ENCODE measurements at regions of chr15 and their contacts with region 1.

Region 1: DNA sequence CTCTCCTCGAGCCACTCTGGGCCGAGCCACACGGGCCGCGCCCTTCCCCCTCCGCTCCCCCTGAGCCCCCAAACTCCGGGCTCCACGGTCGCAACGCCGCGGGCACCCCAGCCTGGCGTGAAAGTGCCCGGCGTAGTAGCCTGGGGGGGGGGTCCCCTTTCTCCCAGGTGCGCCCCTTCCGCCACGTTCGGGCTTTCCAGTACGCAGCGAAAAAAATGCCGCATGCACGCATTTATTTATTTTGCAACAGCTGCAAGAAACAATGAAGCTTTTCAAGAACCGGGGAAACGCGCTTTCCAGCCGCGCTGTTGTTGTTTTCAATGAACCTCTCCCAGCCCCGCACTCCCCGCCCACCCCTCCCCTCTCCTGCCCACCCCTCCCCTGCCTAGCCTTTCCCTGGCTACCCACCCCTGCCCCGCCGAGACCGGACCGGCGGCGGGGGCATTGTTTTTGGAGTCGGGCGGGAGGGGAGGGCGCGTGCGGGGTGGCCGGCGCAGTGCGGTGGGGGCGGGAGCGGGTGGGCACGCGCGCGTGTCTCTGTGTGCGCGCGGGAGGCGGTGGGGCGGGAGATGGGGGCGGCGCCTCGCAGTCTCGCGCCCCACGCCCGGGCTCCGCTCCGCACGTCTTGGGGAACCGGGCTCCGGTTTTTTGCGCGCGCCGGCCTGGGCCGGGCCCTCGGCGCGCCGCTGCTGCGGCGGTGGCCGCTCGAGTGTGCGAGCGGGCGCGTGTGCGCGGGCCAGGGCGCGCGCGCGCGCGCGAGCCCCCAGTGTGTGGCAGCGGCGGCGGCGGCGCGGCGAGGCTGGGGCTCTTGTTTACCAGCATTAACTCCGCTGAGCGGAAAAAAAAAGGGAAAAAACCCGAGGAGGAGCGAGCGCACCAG is at the start of gene IGF1R:
- DNase-seq: peak; percentile 94
- H3K4me3 ChIP-seq: peak within 1 kb of the TSS; percentile 74 to 94 (median 86)
- H3K27ac ChIP-seq: peak within 1 kb of the TSS; percentile 90 to 97 (median 94)
- H3K4me1 ChIP-seq: peaks cover 6 to 33% (median 24%) of the 10 kb centered on the region in 4 donors
- H3K27me3 ChIP-seq: no peaks in the 10 kb centered on the region
- CTCF ChIP-seq: peak in 1 of 3 experiments; percentile 14
- EP300 ChIP-seq: no peak
- POLR2A ChIP-seq: peak; percentile 6
- total RNA-seq, gene IGF1R: 33.6 to 95.3 (median 49.7) TPM

Region 2: GRCh38 chr15:97731859-97732258 is 916.2 kb before region 1 on chr15:
- intact Hi-C with region 1: no loop called
- DNase-seq: no peak
- H3K4me3 ChIP-seq: no peak overlapping the region
- H3K27ac ChIP-seq: no peak overlapping the region
- H3K4me1 ChIP-seq: peaks cover 0 to 6% (median 0%) of the 10 kb centered on the region in 4 donors
- H3K27me3 ChIP-seq: no peaks in the 10 kb centered on the region
- CTCF ChIP-seq: no peak
- EP300 ChIP-seq: no peak
- POLR2A ChIP-seq: no peak

Region 3: GRCh38 chr15:98442379-98442833 is 205.6 kb before region 1 on chr15:
- intact Hi-C with region 1: loop called (anchors 10 kb)
- DNase-seq: peak; percentile 89
- H3K4me3 ChIP-seq: no peak overlapping the region
- H3K27ac ChIP-seq: no peak overlapping the region
- H3K4me1 ChIP-seq: peaks cover 0 to 3% (median 0%) of the 10 kb centered on the region in 4 donors
- H3K27me3 ChIP-seq: peaks cover 0 to 6% (median 0%) of the 10 kb centered on the region in 4 donors
- CTCF ChIP-seq: peak; percentile 75 to 85 (median 81)
- EP300 ChIP-seq: no peak
- POLR2A ChIP-seq: no peak

Region 4: GRCh38 chr15:98523912-98524662 is 123.9 kb before region 1 on chr15:
- intact Hi-C with region 1: loop called (anchors 5 kb)
- DNase-seq: no peak
- H3K4me3 ChIP-seq: no peak overlapping the region
- H3K27ac ChIP-seq: no peak overlapping the region
- H3K4me1 ChIP-seq: peaks cover 0 to 13% (median 10%) of the 10 kb centered on the region in 4 donors
- H3K27me3 ChIP-seq: no peaks in the 10 kb centered on the region
- CTCF ChIP-seq: no peak
- EP300 ChIP-seq: no peak
- POLR2A ChIP-seq: no peak

Region 5: GRCh38 chr15:98548154-98548971 is 99.7 kb before region 1 on chr15:
- intact Hi-C with region 1: loop called (anchors 2 kb)
- DNase-seq: peak; percentile 93
- H3K4me3 ChIP-seq: peak overlapping the region; percentile 62 to 76 (median 71)
- H3K27ac ChIP-seq: peak overlapping the region; percentile 87 to 92 (median 90)
- H3K4me1 ChIP-seq: peaks cover 8 to 22% (median 19%) of the 10 kb centered on the region in 4 donors
- H3K27me3 ChIP-seq: no peaks in the 10 kb centered on the region
- CTCF ChIP-seq: peak in 2 of 3 experiments; percentile 11 to 29
- EP300 ChIP-seq: no peak
- POLR2A ChIP-seq: no peak

Region 6: DNA sequence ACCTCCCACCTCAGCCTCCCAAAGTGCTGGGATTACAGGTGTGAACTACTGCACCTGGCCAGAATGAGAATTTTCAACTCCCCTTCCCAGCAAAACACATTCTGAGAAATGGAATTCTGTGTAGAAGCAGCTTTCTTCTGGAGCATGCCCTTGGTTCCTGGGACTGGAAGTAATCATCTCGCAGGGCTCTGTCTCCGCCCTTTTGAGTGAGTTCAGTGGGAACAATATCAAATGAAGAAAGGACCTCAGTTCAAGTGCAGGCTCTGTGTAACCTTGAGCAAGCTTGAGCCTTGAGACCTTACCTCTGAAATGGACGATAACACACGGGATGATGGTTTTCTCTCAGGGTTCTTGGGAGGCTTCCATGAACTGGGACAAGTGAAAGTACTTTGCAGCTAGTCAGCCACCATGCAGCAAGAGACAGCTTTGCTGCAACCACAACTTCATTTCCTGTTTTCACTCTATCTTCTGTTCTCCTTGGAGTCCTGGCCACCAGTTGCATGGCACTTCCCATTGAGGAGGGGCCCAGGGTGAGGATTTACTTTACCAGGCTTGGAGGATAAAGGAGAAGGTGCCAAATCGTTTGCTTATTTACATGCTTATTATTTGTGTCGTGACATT is 35.4 kb before region 1 on chr15:
- intact Hi-C with region 1: no loop called
- DNase-seq: peak; percentile 85
- H3K4me3 ChIP-seq: no peak overlapping the region
- H3K27ac ChIP-seq: no peak overlapping the region
- H3K4me1 ChIP-seq: no peaks in the 10 kb centered on the region
- H3K27me3 ChIP-seq: peaks cover 0 to 23% (median 0%) of the 10 kb centered on the region in 4 donors
- CTCF ChIP-seq: no peak
- EP300 ChIP-seq: no peak
- POLR2A ChIP-seq: no peak

Region 7: DNA sequence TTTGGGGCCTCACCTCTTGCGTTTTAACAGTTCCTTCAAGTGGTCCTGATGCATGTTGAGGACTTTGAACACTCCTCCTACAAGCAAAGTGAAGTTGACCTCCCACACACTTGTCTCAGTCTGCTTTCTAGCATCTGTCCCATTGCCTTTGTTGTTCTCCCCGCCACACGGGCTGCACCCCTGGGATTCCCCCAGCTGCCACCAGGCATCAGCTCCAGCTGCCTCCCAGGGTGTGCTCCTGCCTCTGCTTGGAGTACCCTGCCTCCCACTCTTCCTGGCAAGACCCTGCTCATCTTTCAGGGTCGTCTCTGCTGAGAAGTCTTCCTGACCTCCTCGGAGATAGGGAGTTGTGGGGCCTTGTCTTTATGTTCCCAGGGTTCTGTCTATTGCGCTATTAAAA is 52.5 kb after region 1 on chr15:
- intact Hi-C with region 1: no loop called
- DNase-seq: no peak
- H3K4me3 ChIP-seq: no peak overlapping the region
- H3K27ac ChIP-seq: no peak overlapping the region
- H3K4me1 ChIP-seq: peaks cover 55 to 85% (median 67%) of the 10 kb centered on the region in 4 donors
- H3K27me3 ChIP-seq: no peaks in the 10 kb centered on the region
- CTCF ChIP-seq: no peak
- EP300 ChIP-seq: no peak
- POLR2A ChIP-seq: no peak

Region 8: GRCh38 chr15:98727115-98728085 is 79.4 kb after region 1 on chr15:
- intact Hi-C with region 1: no loop called
- DNase-seq: peak; percentile 94
- H3K4me3 ChIP-seq: peak overlapping the region in 3 of 4 donors; percentile 0 to 32 (median 1)
- H3K27ac ChIP-seq: peak overlapping the region; percentile 85 to 91 (median 86)
- H3K4me1 ChIP-seq: peaks cover 60 to 89% (median 68%) of the 10 kb centered on the region in 4 donors
- H3K27me3 ChIP-seq: no peaks in the 10 kb centered on the region
- CTCF ChIP-seq: no peak
- EP300 ChIP-seq: no peak
- POLR2A ChIP-seq: no peak

Region 9: GRCh38 chr15:99059010-99059981 is 411.3 kb after region 1 on chr15:
- intact Hi-C with region 1: loop called (anchors 5 kb)
- DNase-seq: peak; percentile 96
- H3K4me3 ChIP-seq: peak overlapping the region; percentile 64 to 70 (median 65)
- H3K27ac ChIP-seq: peak overlapping the region; percentile 93 to 97 (median 96)
- H3K4me1 ChIP-seq: peaks cover 9 to 24% (median 21%) of the 10 kb centered on the region in 4 donors
- H3K27me3 ChIP-seq: no peaks in the 10 kb centered on the region
- CTCF ChIP-seq: peak; percentile 80 to 88 (median 82)
- EP300 ChIP-seq: peak; percentile 3
- POLR2A ChIP-seq: no peak

Region 10: DNA sequence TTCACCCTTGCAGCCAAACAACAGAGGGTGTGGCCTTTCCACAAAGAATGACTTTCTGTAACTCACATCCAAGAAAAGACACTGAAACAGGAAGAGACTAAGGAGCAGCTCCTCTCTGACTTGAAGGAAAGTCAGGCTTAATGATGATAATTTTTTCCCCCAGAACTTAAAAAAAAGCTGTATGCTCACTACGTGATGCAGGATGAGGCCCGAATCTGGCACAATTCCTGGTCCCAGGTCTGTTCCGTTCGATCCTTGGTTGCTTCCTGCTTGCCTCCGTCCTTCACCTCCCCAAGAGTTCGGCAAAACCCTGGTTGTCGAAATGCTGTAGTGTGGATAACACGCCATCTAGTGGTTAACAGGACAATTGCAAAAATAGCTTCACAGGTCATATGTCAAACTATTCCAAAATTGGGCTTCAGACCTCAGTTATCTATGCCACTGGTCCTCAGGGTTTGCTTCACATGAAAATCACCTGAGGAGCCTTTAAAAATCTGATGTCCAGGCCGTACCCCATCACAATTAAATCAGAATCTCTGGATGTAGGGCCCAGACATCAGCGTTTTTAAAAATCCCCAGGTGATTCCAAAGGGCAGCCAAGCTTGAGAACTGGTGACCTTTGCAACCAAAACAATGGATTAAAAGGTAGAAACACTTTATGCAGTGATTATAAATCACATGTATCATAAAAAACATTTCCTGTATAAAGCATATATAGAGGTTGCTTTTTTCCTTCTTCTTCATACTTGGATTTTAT is 428.7 kb after region 1 on chr15:
- intact Hi-C with region 1: loop called (anchors 5 kb)
- DNase-seq: no peak
- H3K4me3 ChIP-seq: peak overlapping the region; percentile 40 to 58 (median 47)
- H3K27ac ChIP-seq: peak overlapping the region; percentile 69 to 74 (median 71)
- H3K4me1 ChIP-seq: peaks cover 0 to 13% (median 7%) of the 10 kb centered on the region in 4 donors
- H3K27me3 ChIP-seq: no peaks in the 10 kb centered on the region
- CTCF ChIP-seq: peak; percentile 87 to 94 (median 88)
- EP300 ChIP-seq: no peak
- POLR2A ChIP-seq: no peak

Measured in esophagus muscularis mucosa (tissue), 4 donors.